BJ (cell line): ENCODE measurements at regions of chr11 and their contacts with region 1.

Region 1: DNA sequence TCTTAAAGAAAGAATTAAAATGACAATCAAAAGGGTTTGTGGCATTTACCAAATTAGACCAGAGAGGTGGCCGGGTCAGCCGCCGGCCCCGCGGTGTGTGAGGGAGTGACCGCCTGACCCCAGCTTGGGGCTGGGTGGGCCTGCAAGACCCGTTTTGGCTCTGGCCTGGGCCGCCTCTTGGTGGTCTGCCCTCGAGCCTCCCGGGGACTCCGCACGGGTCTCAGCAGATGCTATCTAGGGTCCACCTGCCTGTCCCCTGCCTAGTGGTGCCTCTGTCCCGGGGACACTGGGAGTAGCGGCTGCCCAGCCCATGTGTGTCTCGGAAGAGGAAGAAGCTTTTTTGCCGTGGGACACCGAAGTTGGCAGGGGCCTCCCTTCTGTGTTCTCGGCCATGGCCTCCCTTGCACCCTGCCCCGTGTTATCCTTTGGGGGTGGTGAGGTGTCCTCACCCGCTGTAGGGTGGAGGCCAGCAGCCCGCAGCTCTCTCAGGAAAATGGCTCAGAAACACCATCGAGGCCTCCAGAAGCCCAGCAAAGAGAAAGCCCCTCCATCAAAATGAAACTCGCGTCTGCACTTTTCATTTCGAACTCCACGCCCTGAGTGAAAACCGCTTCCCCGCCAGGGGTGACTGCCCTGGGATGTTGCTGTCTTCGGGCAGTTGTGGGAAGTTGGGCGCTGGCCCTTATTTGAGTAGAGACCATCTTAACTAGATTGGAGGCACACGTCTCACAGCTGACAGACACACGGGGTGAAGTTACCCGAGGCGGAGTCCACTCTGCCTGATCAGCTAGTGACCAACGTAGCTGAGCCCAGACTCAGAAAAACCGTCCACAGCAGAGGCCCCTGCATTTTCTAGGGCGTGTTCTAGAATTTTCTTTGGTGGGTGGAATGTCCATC is 8.0 kb downstream of the CCND1 start:
- DNase-seq: no peak
- H3K4me3 ChIP-seq: no peak overlapping the region
- H3K27me3 ChIP-seq: no peaks in the 10 kb centered on the region
- CTCF ChIP-seq: no peak

Region 2: GRCh38 chr11:69122642-69123431 is 526.1 kb before region 1 on chr11:
- CTCF ChIA-PET with region 1: interaction called, 3 read pairs
- POLR2A ChIA-PET with region 1: interaction called, 17 read pairs
- DNase-seq: no peak
- H3K4me3 ChIP-seq: no peak overlapping the region
- H3K27me3 ChIP-seq: no peaks in the 10 kb centered on the region
- CTCF ChIP-seq: no peak